CD4-positive, alpha-beta memory T cell (primary cell): ENCODE measurements at regions of chr16 and their contacts with region 1.

Region 1: DNA sequence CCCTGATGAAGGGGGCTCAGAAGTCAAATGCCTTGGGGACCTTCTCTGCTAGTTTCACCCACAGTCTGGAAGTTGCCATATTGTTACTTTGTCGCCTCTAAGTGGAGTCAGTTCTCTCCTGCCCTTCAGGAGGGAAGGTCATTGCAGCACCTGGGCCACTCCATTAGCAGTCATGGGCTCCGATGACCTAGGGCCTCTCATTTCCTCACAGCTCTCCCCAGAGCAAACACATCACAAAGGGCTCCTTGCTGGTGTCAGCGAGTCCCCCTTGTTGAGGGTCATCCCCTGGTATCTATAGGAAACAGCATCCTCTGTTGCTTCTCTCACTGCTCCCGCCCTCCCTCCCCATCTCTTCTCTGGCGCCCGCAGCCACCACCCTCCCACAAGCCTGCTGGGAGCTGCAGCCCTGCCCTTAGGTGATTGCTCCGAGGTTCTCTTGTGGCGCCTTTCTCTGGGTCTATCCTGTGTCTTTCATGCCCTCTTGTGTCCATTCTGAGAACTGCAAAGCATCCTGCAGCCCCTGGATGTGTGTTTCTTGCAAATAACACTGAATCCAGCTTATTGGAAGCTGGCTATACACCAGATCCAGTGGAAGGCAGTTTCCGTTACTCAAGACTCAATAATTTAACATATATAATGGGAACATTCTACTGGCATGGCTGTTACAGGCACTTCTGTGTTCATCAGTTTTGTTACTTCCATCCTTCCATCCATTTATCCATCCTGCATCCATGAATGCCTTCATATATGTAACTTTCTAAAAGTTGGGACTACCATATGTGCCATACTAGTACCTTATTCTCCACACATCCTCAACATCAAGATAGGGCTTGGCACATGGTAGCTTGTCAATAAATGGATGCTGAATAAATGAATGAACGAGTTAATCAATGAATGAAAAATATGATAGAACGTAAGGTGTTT is 21.2 kb downstream of the PDILT start:
- DNase-seq: peak in 4 of 5 donors; percentile 23 to 40 (median 30)
- H3K4me3 ChIP-seq: no peak overlapping the region
- H3K4me3 Mint-ChIP-seq: no peak overlapping the region
- H3K27ac ChIP-seq: no peak overlapping the region
- H3K27ac Mint-ChIP-seq: no peak overlapping the region
- H3K4me1 ChIP-seq: no peaks in the 10 kb centered on the region
- H3K4me1 Mint-ChIP-seq: peaks cover 0 to 4% (median 2%) of the 10 kb centered on the region in 4 donors
- H3K27me3 ChIP-seq: no peaks in the 10 kb centered on the region
- H3K27me3 Mint-ChIP-seq: peaks cover 10 to 12% of the 10 kb centered on the region in 2 donors

Region 2: GRCh38 chr16:20372701-20373100 is 10.7 kb before region 1 on chr16:
- CTCF ChIA-PET with region 1: interaction called, 60 read pairs
- POLR2A ChIA-PET with region 1: no interaction called
- intact Hi-C with region 1: no loop called
- DNase-seq: no peak
- H3K4me3 ChIP-seq: no peak overlapping the region
- H3K4me3 Mint-ChIP-seq: no peak overlapping the region
- H3K27ac ChIP-seq: no peak overlapping the region
- H3K27ac Mint-ChIP-seq: no peak overlapping the region
- H3K4me1 ChIP-seq: no peaks in the 10 kb centered on the region
- H3K4me1 Mint-ChIP-seq: no peaks in the 10 kb centered on the region
- H3K27me3 ChIP-seq: no peaks in the 10 kb centered on the region
- H3K27me3 Mint-ChIP-seq: peaks cover 1 to 20% of the 10 kb centered on the region in 2 donors

Region 3: GRCh38 chr16:20393801-20394577 is 10.6 kb after region 1 on chr16:
- CTCF ChIA-PET with region 1: interaction called, 49 read pairs
- POLR2A ChIA-PET with region 1: no interaction called
- intact Hi-C with region 1: no loop called
- DNase-seq: no peak
- H3K4me3 ChIP-seq: no peak overlapping the region
- H3K4me3 Mint-ChIP-seq: no peak overlapping the region
- H3K27ac ChIP-seq: no peak overlapping the region
- H3K27ac Mint-ChIP-seq: no peak overlapping the region
- H3K4me1 ChIP-seq: no peaks in the 10 kb centered on the region
- H3K4me1 Mint-ChIP-seq: no peaks in the 10 kb centered on the region
- H3K27me3 ChIP-seq: no peaks in the 10 kb centered on the region
- H3K27me3 Mint-ChIP-seq: no peaks in the 10 kb centered on the region